CD4-positive, alpha-beta T cell (primary cell): ENCODE measurements at regions of chr1 and their contacts with region 1.

Region 1: DNA sequence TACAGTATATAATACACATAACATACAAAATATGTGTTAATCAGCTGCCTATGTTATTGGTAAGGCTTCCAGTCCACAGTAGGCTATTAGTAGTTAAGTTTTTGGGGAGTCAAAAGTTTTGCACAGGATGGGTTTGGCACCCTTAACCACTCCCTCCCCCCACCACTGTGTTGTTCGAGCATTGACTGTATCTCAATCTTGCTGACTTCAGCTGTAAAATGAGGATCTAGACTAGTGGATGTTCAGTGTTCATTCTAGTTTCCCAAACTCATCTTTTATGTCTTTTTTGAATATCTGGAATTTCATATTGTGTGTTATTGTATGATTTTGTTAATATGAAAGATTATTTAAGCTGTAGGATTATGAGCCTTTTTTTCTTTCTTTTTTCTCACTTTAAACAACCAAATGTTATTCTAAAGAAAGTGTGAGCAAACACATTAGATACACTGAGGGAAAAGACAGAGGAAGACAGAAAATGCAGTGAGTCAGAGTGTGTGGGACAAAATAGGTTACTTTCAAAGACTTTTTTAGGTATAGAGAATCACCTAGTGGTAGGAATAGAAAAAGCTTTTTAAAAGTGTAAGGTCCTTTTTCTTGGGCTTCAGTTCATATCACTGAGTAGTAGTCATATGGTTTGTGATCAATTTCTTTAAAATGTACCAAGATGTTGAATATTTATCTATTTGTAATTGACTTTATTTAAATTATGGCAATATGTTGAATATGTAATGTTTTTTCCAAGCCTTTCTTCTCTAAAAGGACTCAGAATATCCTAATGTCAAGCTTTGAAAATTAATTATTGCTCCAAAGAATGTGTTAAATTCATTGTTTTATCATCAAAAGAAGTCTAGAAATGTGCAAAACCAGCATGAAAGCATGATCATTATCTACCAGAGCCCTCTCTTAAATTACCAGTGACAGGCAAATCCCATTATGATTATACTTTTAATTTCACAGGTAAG is 17.9 kb upstream of the CENPF start:
- DNase-seq: peak in 2 of 14 experiments; percentile 2 to 5
- ATAC-seq: peak; percentile 49
- H3K4me3 ChIP-seq: no peak overlapping the region
- H3K4me3 Mint-ChIP-seq: no peak overlapping the region
- H3K27ac ChIP-seq: no peak overlapping the region
- H3K27ac Mint-ChIP-seq: no peak overlapping the region
- H3K4me1 ChIP-seq: no peaks in the 10 kb centered on the region
- H3K4me1 Mint-ChIP-seq: no peaks in the 10 kb centered on the region
- H3K27me3 ChIP-seq: peaks cover 0 to 2% of the 10 kb centered on the region in 2 experiments
- H3K27me3 Mint-ChIP-seq: peaks cover 4% of the 10 kb centered on the region
- CTCF ChIP-seq: peak; percentile 57

Region 2: GRCh38 chr1:214386747-214387146 is 198.3 kb before region 1 on chr1:
- CTCF ChIA-PET with region 1: no interaction called
- POLR2A ChIA-PET with region 1: no interaction called
- intact Hi-C with region 1: loop called (anchors 1 to 2 kb)
- DNase-seq: no peak
- ATAC-seq: no peak
- H3K4me3 ChIP-seq: no peak overlapping the region
- H3K4me3 Mint-ChIP-seq: no peak overlapping the region
- H3K27ac ChIP-seq: no peak overlapping the region
- H3K27ac Mint-ChIP-seq: no peak overlapping the region
- H3K4me1 ChIP-seq: no peaks in the 10 kb centered on the region
- H3K4me1 Mint-ChIP-seq: no peaks in the 10 kb centered on the region
- H3K27me3 ChIP-seq: no peaks in the 10 kb centered on the region
- H3K27me3 Mint-ChIP-seq: no peaks in the 10 kb centered on the region
- CTCF ChIP-seq: no peak